ENCODE measurements at regions of chr9 and their contacts with region 1.

Region 1: DNA sequence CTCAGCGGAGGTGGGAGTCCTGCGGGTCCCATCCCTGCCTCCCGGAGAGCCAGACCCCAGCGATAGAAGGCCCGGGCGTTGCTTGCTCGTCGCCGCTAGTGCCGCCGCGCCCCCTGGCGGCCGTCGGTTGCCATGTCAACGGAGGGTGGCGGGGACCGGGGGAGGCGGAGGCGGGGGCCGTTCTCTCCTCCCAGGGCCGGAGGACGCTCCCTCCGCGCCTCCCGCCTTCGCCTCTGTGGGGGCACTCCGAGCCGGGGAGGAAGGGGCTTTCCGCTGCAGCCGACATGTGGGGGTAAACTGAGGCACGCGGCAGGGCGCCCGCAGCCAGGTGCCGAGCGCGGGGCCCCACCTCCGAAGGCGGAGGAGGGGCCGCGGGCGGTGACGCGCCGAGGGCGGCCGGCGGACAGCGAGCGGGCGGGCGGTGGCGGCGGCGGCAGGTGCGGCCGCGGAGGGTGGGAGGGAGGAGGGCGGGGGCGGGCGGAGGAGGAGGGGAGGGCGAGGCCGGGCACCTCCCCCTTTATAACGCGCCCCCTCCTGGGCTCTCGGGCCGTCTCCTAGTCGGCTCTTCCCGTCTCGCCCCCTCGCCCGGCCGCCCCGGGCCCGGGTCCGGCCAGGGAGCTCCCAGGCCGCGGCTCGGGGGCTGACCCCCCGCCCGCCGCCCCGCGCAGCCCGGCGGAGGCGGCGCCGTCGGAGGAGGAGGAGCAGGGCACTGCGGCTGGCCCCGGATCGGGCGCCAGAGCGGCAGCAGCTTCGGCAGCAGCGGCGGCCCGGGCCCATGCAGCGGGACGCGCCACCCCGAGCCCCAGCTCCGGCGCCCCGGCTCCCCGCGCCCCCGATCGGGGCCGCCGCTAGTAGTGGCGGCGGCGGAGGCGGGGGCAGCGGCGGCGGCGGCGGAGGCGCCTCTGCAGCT is 556 bp upstream of the CDK9 start:
- DNase-seq: peak; percentile 93
- H3K4me3 Mint-ChIP-seq: peak overlapping the region; percentile 77
- H3K27ac Mint-ChIP-seq: peak overlapping the region; percentile 96
- H3K4me1 Mint-ChIP-seq: peaks cover 76% of the 10 kb centered on the region
- H3K27me3 Mint-ChIP-seq: no peaks in the 10 kb centered on the region

Region 2: DNA sequence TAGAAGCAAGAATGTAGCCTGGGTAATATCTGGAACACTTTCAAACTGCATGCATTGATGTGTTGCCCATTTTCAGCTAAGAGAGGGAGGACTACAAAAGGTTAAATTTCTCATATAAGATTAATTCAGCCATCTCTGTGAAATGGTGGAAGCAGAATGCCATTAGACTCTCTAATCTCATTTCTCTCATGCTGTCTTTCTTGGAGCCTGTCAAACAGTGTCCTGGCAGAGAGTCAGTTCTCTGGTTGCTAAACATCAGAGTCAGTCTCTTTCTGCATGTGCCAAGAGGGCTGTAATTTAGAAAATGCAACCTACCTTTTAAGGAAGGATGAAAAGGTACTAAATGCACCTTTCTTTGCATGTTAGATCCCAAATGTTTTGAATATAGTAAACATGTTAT is 521.6 kb before region 1 on chr9:
- CTCF ChIA-PET with region 1: no interaction called
- POLR2A ChIA-PET with region 1: no interaction called
- intact Hi-C with region 1: no loop called
- DNase-seq: no peak
- H3K4me3 Mint-ChIP-seq: no peak overlapping the region
- H3K27ac Mint-ChIP-seq: no peak overlapping the region
- H3K4me1 Mint-ChIP-seq: peaks cover 3% of the 10 kb centered on the region
- H3K27me3 Mint-ChIP-seq: no peaks in the 10 kb centered on the region

Region 3: DNA sequence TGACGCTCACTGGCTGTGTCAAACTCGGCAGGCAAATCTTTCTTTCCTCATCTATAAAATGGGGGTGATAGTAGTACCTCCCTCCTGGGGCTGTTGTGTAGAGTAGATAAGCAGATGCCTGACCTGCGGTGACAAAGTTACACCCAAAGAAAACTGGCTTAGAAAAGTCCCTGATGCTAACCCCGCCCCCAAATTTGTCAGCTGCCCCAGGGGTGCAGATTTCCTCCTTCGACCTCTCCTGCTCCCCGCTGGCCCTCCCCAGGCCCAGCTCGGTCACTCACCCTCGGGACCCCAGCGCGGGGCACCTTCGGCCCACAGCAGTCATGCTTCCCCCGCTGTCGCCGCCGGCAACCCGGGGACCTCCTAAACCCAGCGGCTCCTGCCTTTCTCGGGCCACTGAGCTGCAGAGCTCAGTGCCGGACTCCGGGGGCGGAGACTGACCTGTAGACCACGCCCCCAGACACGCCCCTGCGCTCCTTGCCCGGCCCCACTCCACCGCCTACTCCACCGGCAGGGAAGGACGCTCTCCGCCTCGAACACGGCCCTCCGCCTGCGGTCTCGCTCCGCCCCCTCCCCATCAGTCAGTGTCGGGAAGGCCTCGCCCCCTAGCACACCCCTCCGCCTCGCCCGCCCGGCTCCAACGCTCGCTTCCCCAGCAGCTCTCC is 14.2 kb before region 1 on chr9:
- CTCF ChIA-PET with region 1: interaction called, 131 read pairs
- POLR2A ChIA-PET with region 1: interaction called, 14 read pairs
- intact Hi-C with region 1: loop called (anchors 1 kb)
- DNase-seq: peak; percentile 99
- H3K4me3 Mint-ChIP-seq: peak overlapping the region; percentile 89
- H3K27ac Mint-ChIP-seq: peak overlapping the region; percentile 85
- H3K4me1 Mint-ChIP-seq: peaks cover 56% of the 10 kb centered on the region
- H3K27me3 Mint-ChIP-seq: no peaks in the 10 kb centered on the region

Region 4: DNA sequence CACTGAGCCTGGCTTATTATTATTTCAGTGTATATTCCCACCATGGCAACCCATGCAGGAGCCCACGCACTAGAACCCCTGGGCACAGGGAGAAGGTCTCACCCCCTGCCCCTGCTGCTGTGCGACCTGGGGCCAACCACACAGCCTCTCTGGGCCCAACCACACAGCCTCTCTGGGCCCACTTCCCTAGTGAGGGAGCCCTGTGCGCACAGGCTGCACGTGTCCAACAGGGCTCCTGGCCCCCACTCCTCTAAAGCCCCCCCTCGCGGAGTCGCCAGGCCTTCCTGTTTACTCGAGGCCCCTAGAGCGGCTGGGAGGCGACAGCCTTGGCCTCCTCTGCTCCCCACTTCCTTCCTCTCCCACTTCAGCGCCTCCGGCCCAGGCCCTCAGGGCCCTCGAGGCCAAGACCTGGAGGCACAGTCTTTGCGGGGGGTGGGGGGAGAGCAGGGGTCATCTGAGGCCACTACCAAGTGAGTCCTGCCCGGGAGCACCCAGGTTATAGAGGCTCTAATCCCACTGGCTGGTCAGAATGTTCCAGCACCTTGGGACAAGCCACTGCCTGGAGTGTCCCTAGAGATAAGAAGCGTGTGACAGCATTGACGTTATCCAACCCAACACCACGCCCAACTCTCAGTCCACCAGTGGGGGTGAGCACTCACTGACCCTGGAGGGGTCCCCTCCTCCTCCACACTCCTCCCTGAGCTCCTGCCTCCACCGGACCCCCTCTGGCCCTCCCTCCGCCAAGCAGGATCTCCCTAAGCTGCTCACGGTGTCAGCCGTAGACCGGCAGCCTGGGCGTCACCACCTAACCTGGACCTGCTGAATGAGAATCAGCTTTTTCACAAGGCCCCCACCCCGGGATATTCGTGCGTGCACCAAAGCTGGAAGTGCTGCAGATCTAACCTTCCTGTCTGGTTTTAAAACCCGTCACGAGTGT is 77.1 kb after region 1 on chr9:
- CTCF ChIA-PET with region 1: no interaction called
- POLR2A ChIA-PET with region 1: no interaction called
- intact Hi-C with region 1: loop called (anchors 1 kb)
- DNase-seq: peak; percentile 56
- H3K4me3 Mint-ChIP-seq: no peak overlapping the region
- H3K27ac Mint-ChIP-seq: peak overlapping the region; percentile 71
- H3K4me1 Mint-ChIP-seq: peaks cover 36% of the 10 kb centered on the region
- H3K27me3 Mint-ChIP-seq: no peaks in the 10 kb centered on the region

Region 5: DNA sequence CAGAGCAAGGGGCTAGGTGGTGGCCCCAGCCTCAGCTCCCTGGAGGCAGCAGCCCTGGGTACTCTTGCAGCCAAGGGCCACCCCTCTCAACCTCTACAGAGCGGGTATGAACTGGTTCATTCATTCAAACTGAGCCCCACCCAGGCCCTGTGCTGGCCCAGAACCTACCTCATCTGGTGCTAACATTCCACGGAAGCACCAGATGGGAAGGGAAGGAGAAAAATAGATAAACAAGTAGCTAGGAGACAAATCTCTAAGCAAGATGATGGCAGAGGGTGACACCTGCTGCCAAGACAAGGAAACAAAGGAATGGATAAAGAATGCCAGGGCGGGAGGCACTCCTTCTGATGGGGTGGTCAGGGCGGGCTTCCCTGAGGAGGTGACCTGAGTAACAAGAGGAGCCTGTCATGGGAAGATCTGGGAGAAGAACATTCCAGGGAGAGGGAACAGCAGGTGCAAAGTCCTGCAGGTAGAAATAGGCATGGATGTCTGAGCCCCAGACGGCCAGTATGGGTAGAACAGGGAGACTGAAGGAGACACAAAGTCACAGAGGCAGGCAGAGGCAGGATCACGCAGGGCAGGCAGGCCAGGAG is 125.4 kb after region 1 on chr9:
- CTCF ChIA-PET with region 1: no interaction called
- POLR2A ChIA-PET with region 1: no interaction called
- intact Hi-C with region 1: loop called (anchors 1 kb)
- DNase-seq: no peak
- H3K4me3 Mint-ChIP-seq: no peak overlapping the region
- H3K27ac Mint-ChIP-seq: peak overlapping the region; percentile 95
- H3K4me1 Mint-ChIP-seq: peaks cover 39% of the 10 kb centered on the region
- H3K27me3 Mint-ChIP-seq: no peaks in the 10 kb centered on the region

Region 6: DNA sequence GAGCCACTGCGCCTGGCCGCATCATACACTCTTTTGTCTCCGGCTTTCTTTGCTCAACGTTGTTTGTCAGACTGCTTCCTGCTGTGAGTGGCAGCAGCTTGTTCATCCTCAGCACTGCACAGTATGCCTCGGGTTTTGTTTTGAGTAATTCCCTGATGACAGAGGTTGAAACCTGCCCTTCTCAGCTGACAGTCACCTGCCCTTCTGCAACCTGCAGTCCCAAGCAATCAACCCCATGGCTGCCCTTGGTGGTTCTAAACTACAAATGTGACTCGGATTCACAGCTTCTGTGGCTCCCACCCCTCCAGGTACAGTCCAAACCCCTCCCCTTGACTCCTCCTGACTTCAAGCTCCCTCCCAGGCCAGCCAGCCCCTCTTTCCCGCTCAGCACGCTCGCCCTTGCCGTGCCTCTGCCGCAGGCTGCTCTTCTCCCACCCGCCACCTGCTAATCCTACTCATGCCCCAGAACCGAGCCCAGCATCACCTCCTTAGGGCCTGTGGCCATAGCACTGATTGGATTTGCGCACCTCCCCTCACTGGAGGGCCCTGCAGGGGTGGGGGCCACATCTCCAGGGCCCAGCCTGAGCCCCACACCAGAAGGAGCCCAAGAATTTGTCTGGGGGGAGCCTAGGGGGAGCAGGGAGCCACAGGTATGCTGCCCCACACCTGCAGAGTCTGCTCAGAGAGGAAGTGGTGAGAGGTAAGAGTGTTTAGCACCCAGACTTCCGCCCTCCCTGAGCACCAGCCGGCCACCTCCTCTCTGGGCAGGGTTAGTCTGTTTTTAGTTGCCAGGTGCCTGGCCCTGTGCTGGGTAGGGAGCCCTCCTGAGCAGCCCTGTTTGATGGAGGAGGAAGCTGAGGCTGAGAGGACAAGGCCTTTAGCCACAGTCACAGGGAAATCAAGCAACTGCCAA is 185.4 kb after region 1 on chr9:
- CTCF ChIA-PET with region 1: no interaction called
- POLR2A ChIA-PET with region 1: no interaction called
- intact Hi-C with region 1: loop called (anchors 5 kb)
- DNase-seq: peak; percentile 89
- H3K4me3 Mint-ChIP-seq: peak overlapping the region; percentile 62
- H3K27ac Mint-ChIP-seq: peak overlapping the region; percentile 88
- H3K4me1 Mint-ChIP-seq: peaks cover 97% of the 10 kb centered on the region
- H3K27me3 Mint-ChIP-seq: no peaks in the 10 kb centered on the region